Panc1 (cell line): ENCODE measurements at regions of chr3 and their contacts with region 1.

Region 1: GRCh38 chr3:98039322-98040024 is 4.4 kb upstream of the GABRR3 start:
- DNase-seq: peak; percentile 87
- ATAC-seq: peak; percentile 96
- H3K4me3 ChIP-seq: peak overlapping the region in 1 of 2 experiments; percentile 48; a peak in 2 of 4 replicates
- H3K27ac ChIP-seq: no peak overlapping the region
- H3K4me1 ChIP-seq: no peaks in the 10 kb centered on the region
- H3K27me3 ChIP-seq: peaks cover 25% of the 10 kb centered on the region
- CTCF ChIP-seq: peak; percentile 97

Region 2: GRCh38 chr3:97991293-97991682 is 48.2 kb before region 1 on chr3:
- CTCF ChIA-PET with region 1: no interaction called
- POLR2A ChIA-PET with region 1: no interaction called
- in situ Hi-C with region 1: no loop called
- intact Hi-C with region 1: no loop called
- DNase-seq: no peak
- ATAC-seq: no peak
- H3K4me3 ChIP-seq: no peak overlapping the region
- H3K27ac ChIP-seq: no peak overlapping the region
- H3K4me1 ChIP-seq: no peaks in the 10 kb centered on the region
- H3K27me3 ChIP-seq: peaks cover 7% of the 10 kb centered on the region
- CTCF ChIP-seq: no peak

Region 3: GRCh38 chr3:98188545-98188944 is 149.1 kb after region 1 on chr3:
- CTCF ChIA-PET with region 1: no interaction called
- POLR2A ChIA-PET with region 1: no interaction called
- in situ Hi-C with region 1: no loop called
- intact Hi-C with region 1: loop called (anchors 2 kb)
- DNase-seq: no peak
- ATAC-seq: peak; percentile 66; the same call in 1 of the 2 replicates
- H3K4me3 ChIP-seq: no peak overlapping the region
- H3K27ac ChIP-seq: no peak overlapping the region
- H3K4me1 ChIP-seq: no peaks in the 10 kb centered on the region
- H3K27me3 ChIP-seq: no peaks in the 10 kb centered on the region
- CTCF ChIP-seq: peak; percentile 40; the same call in 1 of the 2 replicates

Region 4: GRCh38 chr3:98573181-98573728 is 533.8 kb after region 1 on chr3:
- CTCF ChIA-PET with region 1: no interaction called
- POLR2A ChIA-PET with region 1: no interaction called
- in situ Hi-C with region 1: no loop called
- intact Hi-C with region 1: loop called (anchors 5 kb)
- DNase-seq: no peak
- ATAC-seq: no peak
- H3K4me3 ChIP-seq: no peak overlapping the region
- H3K27ac ChIP-seq: no peak overlapping the region
- H3K4me1 ChIP-seq: no peaks in the 10 kb centered on the region
- H3K27me3 ChIP-seq: peaks cover 3% of the 10 kb centered on the region; the same call in 1 of the 2 replicates
- CTCF ChIP-seq: peak; percentile 46; the same call in 1 of the 2 replicates